ENCODE measurements at regions of chr9 and their contacts with region 1.

Region 1: GRCh38 chr9:124126571-124127289 is 115.2 kb downstream of the LHX2 start:
- DNase-seq: peak in 1 of 2 donors; percentile 82
- H3K4me3 ChIP-seq: no peak overlapping the region
- H3K27ac ChIP-seq: no peak overlapping the region
- H3K4me1 ChIP-seq: no peaks in the 10 kb centered on the region
- H3K27me3 ChIP-seq: no peaks in the 10 kb centered on the region
- CTCF ChIP-seq: peak; percentile 96 to 100 (median 98)

Region 2: GRCh38 chr9:124079176-124079925 is 47.4 kb before region 1 on chr9:
- intact Hi-C with region 1: no loop called
- DNase-seq: no peak
- H3K4me3 ChIP-seq: no peak overlapping the region
- H3K27ac ChIP-seq: no peak overlapping the region
- H3K4me1 ChIP-seq: no peaks in the 10 kb centered on the region
- H3K27me3 ChIP-seq: no peaks in the 10 kb centered on the region
- CTCF ChIP-seq: no peak

Region 3: DNA sequence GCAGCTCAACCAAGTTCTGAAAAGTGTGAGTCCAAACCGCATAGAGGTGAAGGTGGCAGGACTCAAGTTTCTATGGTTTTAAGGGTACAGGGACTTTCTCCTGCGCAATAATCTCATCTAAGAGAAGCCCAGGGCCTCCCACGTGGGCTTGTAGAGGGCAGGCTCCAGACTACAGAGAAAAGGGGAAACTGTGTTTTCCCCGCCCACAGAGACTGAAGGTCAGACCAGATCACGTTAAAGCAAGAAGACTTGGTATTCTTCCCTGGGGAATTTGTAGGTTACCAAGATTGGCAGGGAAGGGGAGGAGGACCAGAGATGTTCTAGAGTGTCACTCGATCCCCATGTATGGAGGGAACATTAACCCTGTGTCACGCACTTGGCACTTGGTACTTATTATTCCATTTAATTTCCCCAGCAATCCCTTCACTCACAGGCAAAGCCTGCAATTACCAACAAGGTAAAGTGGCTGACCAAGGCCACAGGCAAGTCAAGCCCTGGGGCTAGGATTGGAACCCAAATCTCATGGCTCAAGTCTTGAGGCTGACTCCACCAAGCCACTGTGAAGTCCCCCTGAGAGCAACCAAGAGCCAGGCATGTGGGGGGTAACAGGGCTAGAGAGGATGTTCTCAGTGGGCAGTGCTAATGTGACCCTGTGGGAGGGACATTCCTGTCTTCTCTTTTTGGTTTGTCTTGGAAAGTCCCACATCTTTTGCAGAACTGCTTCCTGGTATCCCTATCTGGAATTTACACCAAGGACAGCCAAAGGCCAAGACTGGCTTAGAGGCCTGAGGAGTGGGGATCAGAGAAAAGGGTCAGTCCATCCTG is 112.7 kb after region 1 on chr9:
- intact Hi-C with region 1: loop called (anchors 10 kb)
- DNase-seq: no peak
- H3K4me3 ChIP-seq: no peak overlapping the region
- H3K27ac ChIP-seq: no peak overlapping the region
- H3K4me1 ChIP-seq: no peaks in the 10 kb centered on the region
- H3K27me3 ChIP-seq: no peaks in the 10 kb centered on the region
- CTCF ChIP-seq: no peak

Region 4: DNA sequence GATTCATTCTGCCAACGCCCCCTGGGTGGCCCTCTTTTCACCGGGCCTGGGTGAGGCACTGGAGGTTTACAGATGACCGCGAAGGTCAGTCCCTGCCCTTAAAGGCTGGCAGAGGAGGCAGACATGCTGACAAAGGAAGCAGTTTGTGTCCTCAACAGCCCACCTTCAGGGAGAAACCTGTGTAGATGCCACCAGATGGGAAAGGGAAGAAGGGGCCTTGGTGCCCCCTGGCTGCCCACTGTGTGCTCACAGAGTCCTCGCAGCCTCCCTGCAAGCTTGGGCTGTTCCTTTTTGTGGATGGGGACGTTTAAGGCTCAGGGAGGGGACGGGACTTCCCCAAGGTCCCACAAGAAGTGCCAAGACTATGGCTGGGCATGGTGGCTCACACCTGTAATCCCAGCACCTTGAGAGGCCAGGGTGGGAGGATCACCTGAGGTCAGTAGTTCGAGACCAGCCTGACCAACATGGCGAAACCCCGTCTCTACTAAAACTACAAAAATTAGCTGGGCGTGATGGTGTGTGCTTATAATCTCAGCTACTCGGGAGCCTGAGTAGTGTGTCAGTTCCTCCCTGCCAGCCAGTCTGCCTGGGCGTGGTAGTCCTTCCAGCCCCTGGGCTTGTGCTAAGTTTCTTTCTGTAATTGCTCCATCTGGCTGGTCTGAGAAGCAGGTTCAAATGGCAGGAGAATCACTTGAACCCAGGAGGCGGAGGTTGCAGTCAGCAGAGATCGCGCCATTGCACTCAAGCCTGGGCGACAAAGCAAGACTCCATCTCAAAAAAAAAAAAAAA is 167.2 kb after region 1 on chr9:
- intact Hi-C with region 1: loop called (anchors 1 kb)
- DNase-seq: no peak
- H3K4me3 ChIP-seq: no peak overlapping the region
- H3K27ac ChIP-seq: no peak overlapping the region
- H3K4me1 ChIP-seq: peaks cover 20 to 45% of the 10 kb centered on the region in 2 donors
- H3K27me3 ChIP-seq: no peaks in the 10 kb centered on the region
- CTCF ChIP-seq: peak in 1 of 3 experiments; percentile 21

Region 5: GRCh38 chr9:124320062-124320973 is 193.6 kb after region 1 on chr9:
- intact Hi-C with region 1: loop called (anchors 1 kb)
- DNase-seq: peak in 1 of 2 donors; percentile 77
- H3K4me3 ChIP-seq: no peak overlapping the region
- H3K27ac ChIP-seq: no peak overlapping the region
- H3K4me1 ChIP-seq: peaks cover 0 to 4% of the 10 kb centered on the region in 2 donors
- H3K27me3 ChIP-seq: no peaks in the 10 kb centered on the region
- CTCF ChIP-seq: peak; percentile 80 to 86 (median 81)

Region 6: GRCh38 chr9:124392871-124393460 is 266.2 kb after region 1 on chr9:
- intact Hi-C with region 1: loop called (anchors 10 kb)
- DNase-seq: no peak
- H3K4me3 ChIP-seq: no peak overlapping the region
- H3K27ac ChIP-seq: no peak overlapping the region
- H3K4me1 ChIP-seq: peaks cover 3 to 4% of the 10 kb centered on the region in 2 donors
- H3K27me3 ChIP-seq: no peaks in the 10 kb centered on the region
- CTCF ChIP-seq: no peak

Region 7: GRCh38 chr9:124537926-124538325 is 411.2 kb after region 1 on chr9:
- intact Hi-C with region 1: loop called (anchors 2 kb)
- DNase-seq: no peak
- H3K4me3 ChIP-seq: no peak overlapping the region
- H3K27ac ChIP-seq: no peak overlapping the region
- H3K4me1 ChIP-seq: no peaks in the 10 kb centered on the region
- H3K27me3 ChIP-seq: no peaks in the 10 kb centered on the region
- CTCF ChIP-seq: no peak

Measured in ascending aorta (tissue), 2 donors.